Adrenal gland (tissue), 19 donors: ENCODE measurements at regions of chr1 and their contacts with region 1.

Region 1: DNA sequence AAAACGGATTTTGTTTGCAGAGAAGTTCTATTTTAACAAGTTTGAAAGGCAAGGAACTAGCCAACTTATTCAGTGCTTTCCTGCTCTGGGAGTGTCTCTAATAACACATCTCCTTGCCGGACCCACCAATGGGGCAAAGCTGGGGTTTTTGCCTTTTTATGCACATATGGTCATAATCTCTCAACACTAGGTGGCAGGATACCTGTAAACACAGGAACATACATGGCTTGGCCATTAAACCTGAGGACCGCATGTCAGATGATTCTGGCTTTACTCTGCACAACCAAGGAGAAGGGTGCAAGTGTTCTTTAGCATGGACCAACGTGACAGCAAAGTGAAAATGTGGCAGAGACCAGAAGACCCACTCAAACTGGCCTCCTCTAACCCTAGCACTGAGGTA is 4.9 kb downstream of the TMEM9 start:
- DNase-seq: no peak
- H3K4me3 ChIP-seq: no peak overlapping the region
- H3K27ac ChIP-seq: no peak overlapping the region
- H3K4me1 ChIP-seq: peaks cover 7 to 20% of the 10 kb centered on the region in 2 donors
- H3K27me3 ChIP-seq: no peaks in the 10 kb centered on the region
- CTCF ChIP-seq: peak in 5 of 6 experiments; percentile 16 to 33 (median 24)
- POLR2A ChIP-seq: no peak

Region 2: GRCh38 chr1:201206176-201206575 is 56.8 kb after region 1 on chr1:
- intact Hi-C with region 1: loop called in 1 of 2 experiments (anchors 10 kb)
- DNase-seq: no peak
- H3K4me3 ChIP-seq: no peak overlapping the region
- H3K27ac ChIP-seq: no peak overlapping the region
- H3K4me1 ChIP-seq: no peaks in the 10 kb centered on the region
- H3K27me3 ChIP-seq: no peaks in the 10 kb centered on the region
- CTCF ChIP-seq: no peak
- POLR2A ChIP-seq: no peak

Region 3: GRCh38 chr1:201329286-201329685 is 179.9 kb after region 1 on chr1:
- intact Hi-C with region 1: no loop called
- DNase-seq: no peak
- H3K4me3 ChIP-seq: no peak overlapping the region
- H3K27ac ChIP-seq: no peak overlapping the region
- H3K4me1 ChIP-seq: no peaks in the 10 kb centered on the region
- H3K27me3 ChIP-seq: no peaks in the 10 kb centered on the region
- CTCF ChIP-seq: no peak
- POLR2A ChIP-seq: no peak